ENCODE measurements at regions of chr11 and their contacts with region 1.

Region 1: GRCh38 chr11:74388678-74389327 is 9.4 kb downstream of the PGM2L1 start:
- DNase-seq: peak; percentile 41 to 79 (median 66)
- ATAC-seq: peak; percentile 95
- H3K4me3 ChIP-seq: no peak overlapping the region
- H3K4me3 Mint-ChIP-seq: no peak overlapping the region
- H3K27ac ChIP-seq: no peak overlapping the region
- H3K27ac Mint-ChIP-seq: no peak overlapping the region
- H3K4me1 ChIP-seq: peaks cover 3% of the 10 kb centered on the region
- H3K4me1 Mint-ChIP-seq: peaks cover 21% of the 10 kb centered on the region
- H3K27me3 ChIP-seq: no peaks in the 10 kb centered on the region
- H3K27me3 Mint-ChIP-seq: no peaks in the 10 kb centered on the region
- CTCF ChIP-seq: peak; percentile 87

Region 2: GRCh38 chr11:74311352-74311926 is 77.4 kb before region 1 on chr11 and contains the start of gene P4HA3:
- CTCF ChIA-PET with region 1: no interaction called
- POLR2A ChIA-PET with region 1: no interaction called
- intact Hi-C with region 1: no loop called
- DNase-seq: peak in 8 of 9 experiments; percentile 12 to 55 (median 35)
- ATAC-seq: peak; percentile 80
- H3K4me3 ChIP-seq: peak within 1 kb of the TSS in 1 of 2 experiments; percentile 29
- H3K4me3 Mint-ChIP-seq: peak within 1 kb of the TSS; percentile 60
- H3K27ac ChIP-seq: no peak within 1 kb of the TSS
- H3K27ac Mint-ChIP-seq: no peak within 1 kb of the TSS
- H3K4me1 ChIP-seq: peaks cover 6% of the 10 kb centered on the region
- H3K4me1 Mint-ChIP-seq: peaks cover 11% of the 10 kb centered on the region
- H3K27me3 ChIP-seq: peaks cover 13 to 15% of the 10 kb centered on the region in 2 experiments
- H3K27me3 Mint-ChIP-seq: peaks cover 35% of the 10 kb centered on the region
- CTCF ChIP-seq: no peak
- total RNA-seq, gene P4HA3: not detected

Region 3: GRCh38 chr11:74443071-74443864 is 54.5 kb after region 1 on chr11:
- CTCF ChIA-PET with region 1: interaction called, 196 read pairs
- POLR2A ChIA-PET with region 1: interaction called, 3 read pairs
- intact Hi-C with region 1: no loop called
- DNase-seq: no peak
- ATAC-seq: no peak
- H3K4me3 ChIP-seq: no peak overlapping the region
- H3K4me3 Mint-ChIP-seq: no peak overlapping the region
- H3K27ac ChIP-seq: no peak overlapping the region
- H3K27ac Mint-ChIP-seq: no peak overlapping the region
- H3K4me1 ChIP-seq: no peaks in the 10 kb centered on the region
- H3K4me1 Mint-ChIP-seq: no peaks in the 10 kb centered on the region
- H3K27me3 ChIP-seq: no peaks in the 10 kb centered on the region
- H3K27me3 Mint-ChIP-seq: no peaks in the 10 kb centered on the region
- CTCF ChIP-seq: no peak

Region 4: DNA sequence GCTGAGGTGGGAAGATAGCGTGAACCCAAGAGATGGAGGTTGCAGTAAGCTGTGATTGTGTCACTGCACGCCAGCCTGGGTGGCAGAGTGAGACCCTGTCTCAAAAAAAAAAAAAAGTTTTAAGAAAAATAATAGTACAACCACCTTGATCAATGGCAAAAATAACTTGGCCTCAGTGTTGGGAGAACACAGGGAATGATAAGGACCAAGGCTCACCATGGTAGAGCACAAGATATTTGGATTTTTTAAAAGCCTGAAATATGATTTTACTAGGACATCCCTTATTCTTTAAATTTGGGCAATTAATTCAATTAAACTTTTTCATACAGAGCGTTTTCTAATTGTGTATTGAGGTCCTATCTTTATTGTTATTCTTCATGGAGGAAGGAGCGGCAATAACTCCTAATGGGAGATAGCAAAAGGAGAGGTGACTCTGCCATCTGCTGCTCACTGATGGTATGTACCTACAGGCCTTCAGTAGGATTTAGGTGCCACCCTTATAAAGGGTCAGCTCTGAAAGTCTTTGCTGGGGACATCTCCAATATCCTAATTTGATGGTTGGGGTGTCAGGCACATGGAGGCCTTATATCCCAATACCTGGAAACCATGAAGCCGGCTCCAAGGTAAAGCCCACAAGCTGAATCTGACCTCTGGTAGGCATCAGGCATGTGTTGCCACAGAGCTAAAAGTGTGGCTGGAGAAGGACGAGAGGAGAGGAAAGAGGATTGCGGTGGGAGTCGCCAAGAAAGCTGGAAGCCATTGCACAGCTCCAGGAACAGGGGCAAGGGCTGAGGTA is 181.7 kb after region 1 on chr11:
- CTCF ChIA-PET with region 1: interaction called, 8 read pairs
- POLR2A ChIA-PET with region 1: no interaction called
- intact Hi-C with region 1: loop called (anchors 1 to 2 kb)
- DNase-seq: peak in 4 of 9 experiments; percentile 7 to 49 (median 23)
- ATAC-seq: no peak
- H3K4me3 ChIP-seq: no peak overlapping the region
- H3K4me3 Mint-ChIP-seq: no peak overlapping the region
- H3K27ac ChIP-seq: no peak overlapping the region
- H3K27ac Mint-ChIP-seq: no peak overlapping the region
- H3K4me1 ChIP-seq: no peaks in the 10 kb centered on the region
- H3K4me1 Mint-ChIP-seq: no peaks in the 10 kb centered on the region
- H3K27me3 ChIP-seq: no peaks in the 10 kb centered on the region
- H3K27me3 Mint-ChIP-seq: peaks cover 7% of the 10 kb centered on the region
- CTCF ChIP-seq: peak; percentile 45

Measured in CD8-positive, alpha-beta T cell (primary cell).